H1 (cell line): ENCODE measurements at regions of chr11 and their contacts with region 1.

Region 1: DNA sequence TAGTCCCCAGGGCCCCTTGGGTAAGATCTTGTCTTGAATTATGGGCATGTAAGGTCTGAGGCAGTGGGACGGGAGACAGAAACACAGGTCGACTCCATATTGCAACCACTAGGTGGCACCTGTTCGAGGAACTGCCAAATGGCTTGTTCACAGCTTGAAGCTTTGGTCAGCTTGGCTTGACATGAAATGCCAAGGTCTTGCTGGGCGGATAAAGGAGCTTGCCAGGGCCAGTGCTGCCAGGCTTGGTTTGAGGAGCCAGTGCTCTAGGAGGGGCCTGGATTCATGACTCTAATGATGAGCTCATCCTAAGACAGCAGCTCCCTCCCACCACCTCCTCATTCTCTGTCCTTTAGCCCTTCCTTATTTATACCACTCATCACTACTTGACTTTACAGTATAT is 11.9 kb upstream of the NRIP3 start:
- DNase-seq: peak; percentile 50 to 64
- H3K4me3 ChIP-seq: no peak overlapping the region
- H3K27ac ChIP-seq: no peak overlapping the region
- H3K4me1 ChIP-seq: no peaks in the 10 kb centered on the region
- H3K27me3 ChIP-seq: no peaks in the 10 kb centered on the region
- CTCF ChIP-seq: peak; percentile 87 to 96 (median 90)
- EP300 ChIP-seq: no peak
- POLR2A ChIP-seq: no peak
- RAD21 ChIP-seq: peak; percentile 79 to 88

Region 2: GRCh38 chr11:8989453-8989852 is 26.2 kb before region 1 on chr11:
- CTCF ChIA-PET with region 1: interaction called, 15 read pairs
- POLR2A ChIA-PET with region 1: no interaction called
- DNase-seq: no peak
- H3K4me3 ChIP-seq: no peak overlapping the region
- H3K27ac ChIP-seq: no peak overlapping the region
- H3K4me1 ChIP-seq: no peaks in the 10 kb centered on the region; a peak in 2 of 7 replicates
- H3K27me3 ChIP-seq: no peaks in the 10 kb centered on the region
- CTCF ChIP-seq: no peak
- EP300 ChIP-seq: no peak
- POLR2A ChIP-seq: no peak
- RAD21 ChIP-seq: no peak

Region 3: GRCh38 chr11:9037046-9037780 is 21.5 kb after region 1 on chr11:
- CTCF ChIA-PET with region 1: interaction called, 14 read pairs
- POLR2A ChIA-PET with region 1: no interaction called
- DNase-seq: no peak
- H3K4me3 ChIP-seq: no peak overlapping the region
- H3K27ac ChIP-seq: 0 out of 2 replicates have a peak overlapping the region, but pooled peaks have one; percentile 7
- H3K4me1 ChIP-seq: peaks cover 0 to 8% (median 2%) of the 10 kb centered on the region in 4 experiments; a peak in 3 of 7 replicates
- H3K27me3 ChIP-seq: no peaks in the 10 kb centered on the region
- CTCF ChIP-seq: no peak
- EP300 ChIP-seq: no peak
- POLR2A ChIP-seq: no peak
- RAD21 ChIP-seq: no peak

Region 4: DNA sequence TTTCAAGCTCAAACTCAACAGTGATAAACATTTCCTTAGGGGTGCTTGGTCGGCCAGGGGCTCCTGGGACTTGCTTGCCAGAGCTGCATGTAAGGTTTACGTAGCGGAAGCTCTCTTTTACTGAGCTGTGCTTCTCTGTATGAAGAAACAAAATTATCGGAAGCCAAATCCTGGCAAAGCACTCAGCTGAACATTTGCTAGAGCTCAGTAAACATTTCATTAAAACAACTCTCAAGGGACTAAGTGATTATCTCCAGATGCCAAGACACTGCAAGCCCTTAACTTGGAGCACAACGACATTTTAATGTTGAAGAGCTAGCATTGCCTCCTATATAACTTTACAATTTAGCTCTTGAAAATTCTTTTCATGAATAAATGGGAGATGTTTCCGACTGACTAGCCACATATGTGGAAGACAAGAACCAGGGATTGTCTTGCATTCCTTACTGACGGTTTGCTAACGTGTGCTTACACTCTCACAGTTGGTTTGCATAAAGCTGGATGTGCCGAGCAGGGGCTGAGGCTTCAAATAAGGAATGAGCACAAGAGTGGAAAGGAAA is 32.4 kb after region 1 on chr11:
- CTCF ChIA-PET with region 1: interaction called, 15 read pairs
- POLR2A ChIA-PET with region 1: no interaction called
- DNase-seq: no peak
- H3K4me3 ChIP-seq: no peak overlapping the region
- H3K27ac ChIP-seq: no peak overlapping the region
- H3K4me1 ChIP-seq: peaks cover 0 to 10% (median 2%) of the 10 kb centered on the region in 4 experiments; a peak in 5 of 7 replicates
- H3K27me3 ChIP-seq: no peaks in the 10 kb centered on the region
- CTCF ChIP-seq: no peak
- EP300 ChIP-seq: no peak
- POLR2A ChIP-seq: no peak
- RAD21 ChIP-seq: no peak

Region 5: GRCh38 chr11:9066433-9066925 is 50.8 kb after region 1 on chr11:
- CTCF ChIA-PET with region 1: interaction called, 43 read pairs
- POLR2A ChIA-PET with region 1: no interaction called
- DNase-seq: peak in 1 of 2 experiments; percentile 47
- H3K4me3 ChIP-seq: no peak overlapping the region
- H3K27ac ChIP-seq: 0 out of 2 replicates have a peak overlapping the region, but pooled peaks have one; percentile 27
- H3K4me1 ChIP-seq: peaks cover 0 to 6% (median 2%) of the 10 kb centered on the region in 4 experiments; a peak in 3 of 7 replicates
- H3K27me3 ChIP-seq: no peaks in the 10 kb centered on the region
- CTCF ChIP-seq: no peak
- EP300 ChIP-seq: no peak
- POLR2A ChIP-seq: no peak
- RAD21 ChIP-seq: 0 out of 4 replicates have a peak, but pooled peaks have one; percentile 1 to 2

Region 6: GRCh38 chr11:9120664-9121485 is 105.2 kb after region 1 on chr11:
- CTCF ChIA-PET with region 1: interaction called, 13 read pairs
- POLR2A ChIA-PET with region 1: no interaction called
- DNase-seq: peak; percentile 36 to 78
- H3K4me3 ChIP-seq: 0 out of 8 replicates have a peak overlapping the region, but pooled peaks of 1 of the 4 experiments have one; percentile 10
- H3K27ac ChIP-seq: 0 out of 2 replicates have a peak overlapping the region, but pooled peaks have one; percentile 4
- H3K4me1 ChIP-seq: peaks cover 4 to 9% (median 5%) of the 10 kb centered on the region in 4 experiments; a peak in 5 of 7 replicates
- H3K27me3 ChIP-seq: no peaks in the 10 kb centered on the region
- CTCF ChIP-seq: peak; percentile 84 to 99 (median 84)
- EP300 ChIP-seq: no peak; a peak in 1 of 3 replicates
- POLR2A ChIP-seq: no peak
- RAD21 ChIP-seq: peak; percentile 48 to 68

Region 7: DNA sequence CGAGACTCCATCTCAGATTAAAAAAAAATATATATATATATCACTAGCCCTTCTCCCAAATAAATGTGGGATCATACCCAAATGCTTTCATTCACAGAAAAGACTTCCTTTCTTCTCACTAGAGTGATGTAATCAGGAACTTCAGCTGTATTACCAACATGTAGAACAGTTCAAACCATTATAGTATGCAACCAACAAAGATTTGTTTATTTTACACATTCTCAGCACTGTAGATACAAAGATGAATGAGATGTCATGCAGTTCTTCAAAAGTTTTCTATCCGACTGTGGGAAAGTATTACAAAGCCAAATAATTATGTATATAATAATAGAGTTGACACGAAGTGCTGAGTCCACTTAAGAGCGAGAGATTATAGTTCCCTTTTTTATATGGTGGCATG is 422.9 kb after region 1 on chr11:
- CTCF ChIA-PET with region 1: no interaction called
- POLR2A ChIA-PET with region 1: no interaction called
- DNase-seq: no peak
- H3K4me3 ChIP-seq: no peak overlapping the region
- H3K27ac ChIP-seq: no peak overlapping the region
- H3K4me1 ChIP-seq: no peaks in the 10 kb centered on the region
- H3K27me3 ChIP-seq: no peaks in the 10 kb centered on the region
- CTCF ChIP-seq: no peak
- EP300 ChIP-seq: no peak
- POLR2A ChIP-seq: no peak
- RAD21 ChIP-seq: no peak